Posterior cingulate gyrus (tissue), 11 donors: ENCODE measurements at regions of chr5 and their contacts with region 1.

Region 1: GRCh38 chr5:38556599-38557305 is at the start of gene LIFR:
- DNase-seq: peak; percentile 72 to 97 (median 82)

Region 2: DNA sequence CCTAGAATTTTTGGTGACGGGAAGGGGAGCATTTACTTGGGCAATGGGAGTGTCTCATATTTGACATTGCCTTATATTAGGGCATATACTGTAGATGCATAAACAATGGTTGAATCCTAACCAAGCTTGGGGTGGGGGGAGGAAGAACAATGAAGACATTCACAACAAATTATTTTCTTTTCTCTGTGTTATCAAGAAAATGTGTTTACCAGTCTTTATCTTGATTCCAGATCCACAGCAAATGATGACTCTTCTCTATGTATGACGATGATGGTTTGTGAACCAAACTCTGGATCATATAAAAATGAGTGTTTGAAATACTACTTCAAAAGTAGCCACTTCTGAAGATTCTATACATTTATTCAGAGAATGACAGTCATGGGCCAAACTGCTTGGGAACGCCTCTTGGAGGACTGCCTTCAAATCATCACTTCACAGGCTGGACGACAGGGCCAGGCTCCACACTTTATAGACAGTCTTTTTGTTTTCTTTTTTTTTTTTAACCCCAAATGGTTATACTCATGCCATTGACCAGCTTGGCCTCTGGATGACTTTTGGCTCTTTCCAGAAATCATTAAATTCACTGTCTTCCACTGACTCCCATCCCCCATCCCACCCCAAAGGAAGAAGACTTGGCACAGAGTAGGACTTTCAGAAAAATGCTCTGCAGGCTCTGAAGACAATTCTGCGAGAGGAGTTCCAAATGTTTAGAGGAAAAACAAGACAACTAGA is 123.5 kb after region 1 on chr5:
- intact Hi-C with region 1: loop called (anchors 10 kb)
- DNase-seq: peak in 3 of 10 donors; percentile 9 to 34 (median 32)

Region 3: DNA sequence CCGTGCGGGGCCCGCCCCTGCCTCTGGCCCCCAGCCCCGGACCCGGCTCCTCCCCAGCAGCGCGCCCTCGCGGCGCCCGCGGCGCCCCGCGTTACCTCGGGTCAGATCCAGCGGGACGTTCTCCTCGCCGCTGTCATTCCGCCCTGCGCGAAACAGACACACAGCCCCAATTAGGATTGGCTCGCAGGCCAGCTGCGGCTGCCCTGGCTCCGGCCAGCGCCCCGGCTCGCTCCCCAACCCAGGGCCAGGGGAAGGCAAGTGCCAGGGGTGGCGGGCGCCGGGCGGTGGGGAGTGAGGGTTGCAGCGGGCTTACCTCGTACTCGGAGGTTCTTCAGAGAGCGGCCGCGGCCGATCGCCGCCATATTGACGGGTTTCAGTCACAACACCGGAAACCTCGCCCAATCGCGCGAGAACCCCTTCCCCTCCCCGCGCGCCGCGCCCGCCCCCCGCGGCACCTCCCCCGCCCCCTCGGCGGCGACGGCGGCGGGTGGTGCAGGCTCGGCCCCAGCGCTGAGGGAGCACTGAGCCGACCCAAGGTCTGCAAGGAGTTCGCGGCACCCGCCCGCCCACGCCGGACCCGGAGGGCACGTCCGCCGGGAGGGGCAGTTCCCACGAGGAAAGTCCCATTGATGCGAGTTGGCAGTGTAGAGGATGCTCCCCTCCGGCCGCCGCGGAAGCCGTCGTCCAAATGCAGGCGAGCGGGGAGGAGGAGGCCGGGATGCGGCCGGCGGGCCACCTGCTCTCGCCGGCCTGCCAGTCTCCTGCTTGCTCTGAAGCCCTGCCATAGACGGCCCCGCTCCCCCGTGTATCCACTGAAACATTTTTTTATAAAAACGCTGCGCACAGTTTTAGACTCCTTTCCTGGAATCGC is 517.5 kb after region 1 on chr5 and contains the start of gene RICTOR:
- intact Hi-C with region 1: loop called (anchors 10 kb)
- DNase-seq: peak; percentile 86 to 99 (median 89)